HEK293T (cell line): ENCODE measurements at regions of chr17 and their contacts with region 1.

Region 1: DNA sequence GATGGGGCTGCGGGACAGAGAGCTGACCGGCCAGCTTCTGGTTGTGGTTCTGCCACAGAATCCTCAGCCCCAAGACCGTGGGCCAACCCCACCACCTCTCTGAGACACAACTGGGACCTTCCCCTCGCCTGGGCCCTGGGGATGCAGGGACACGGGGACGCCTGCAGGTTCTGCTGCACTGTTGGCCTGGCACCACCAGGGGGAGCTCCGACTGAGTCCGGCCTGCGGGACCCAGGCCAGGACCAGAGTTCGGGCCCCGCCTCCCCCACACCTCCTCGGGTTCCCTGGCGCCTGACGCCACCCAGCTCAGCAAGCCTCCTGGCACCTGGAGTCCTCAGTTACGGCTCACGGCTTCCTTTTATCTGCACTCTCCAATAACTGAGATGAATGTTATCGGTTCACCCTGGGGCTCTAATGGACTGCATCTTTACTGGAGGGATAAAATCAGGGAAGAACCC is 27.3 kb downstream of the TBC1D16 start:
- DNase-seq: peak; percentile 93

Region 2: DNA sequence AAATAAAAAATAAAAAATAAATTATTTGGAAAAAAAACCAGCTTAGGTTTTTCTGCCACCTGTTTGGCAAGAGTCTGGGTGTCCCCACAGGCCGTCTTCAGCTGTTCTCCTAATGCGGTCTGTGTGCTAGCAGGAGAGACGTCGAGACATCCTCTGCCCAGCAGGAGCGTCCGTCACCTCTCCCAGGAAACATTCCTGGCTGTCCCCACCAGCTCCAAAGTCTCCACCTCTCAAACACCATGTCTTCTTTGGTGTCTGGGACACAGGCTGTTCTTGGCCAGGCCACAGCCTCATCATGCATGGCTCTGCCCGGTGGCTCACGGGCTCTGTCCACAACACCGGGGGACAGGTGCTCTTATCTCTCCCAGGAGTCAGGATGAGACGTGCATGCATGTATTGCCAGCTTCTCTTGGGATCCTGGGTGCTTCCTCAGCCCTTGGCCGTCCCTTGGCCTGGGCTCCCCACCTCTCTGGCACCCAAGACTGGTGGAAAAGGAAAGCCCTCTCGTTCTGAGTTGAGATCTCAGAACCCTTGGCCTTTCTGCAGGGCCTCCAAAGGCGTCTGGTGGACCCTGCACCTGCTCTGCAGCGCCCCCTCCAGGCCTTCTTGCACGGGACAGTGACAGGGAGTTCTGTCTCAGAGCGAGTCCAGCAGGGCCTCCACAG is 84.3 kb before region 1 on chr17:
- CTCF ChIA-PET with region 1: no interaction called
- POLR2A ChIA-PET with region 1: no interaction called
- DNase-seq: peak; percentile 87

Region 3: DNA sequence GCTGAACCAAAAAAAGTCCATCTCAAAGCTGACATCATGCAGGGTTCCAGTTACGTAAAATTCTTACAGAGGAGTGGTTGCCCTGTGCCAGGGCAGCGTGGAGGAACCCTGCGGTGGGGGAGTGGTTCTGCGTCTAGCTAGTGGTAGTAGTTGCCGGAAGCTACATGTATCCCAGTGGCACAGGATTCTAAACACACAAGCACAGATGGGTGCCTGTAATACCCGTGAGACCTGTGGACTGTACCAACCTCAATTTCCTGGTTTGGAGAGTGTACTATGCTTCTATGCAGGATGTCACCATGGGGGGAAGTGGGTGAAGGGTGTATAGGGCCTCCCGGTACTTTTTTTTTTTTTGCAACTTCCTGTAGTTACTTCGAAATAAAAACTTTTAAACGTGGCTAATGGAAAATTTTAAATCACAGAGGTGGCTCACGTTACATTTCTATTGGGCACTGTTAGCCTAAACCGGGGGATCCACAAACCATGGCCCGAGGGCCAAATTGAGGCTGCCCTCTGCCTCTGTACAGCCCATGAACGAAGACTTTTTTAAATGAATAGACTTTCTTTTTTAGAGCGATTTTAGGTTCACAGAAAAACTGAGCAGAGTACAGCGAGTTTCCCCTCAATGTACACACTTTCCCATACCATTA is 11.3 kb before region 1 on chr17:
- CTCF ChIA-PET with region 1: interaction called, 29 read pairs
- POLR2A ChIA-PET with region 1: interaction called, 35 read pairs
- DNase-seq: no peak

Region 4: DNA sequence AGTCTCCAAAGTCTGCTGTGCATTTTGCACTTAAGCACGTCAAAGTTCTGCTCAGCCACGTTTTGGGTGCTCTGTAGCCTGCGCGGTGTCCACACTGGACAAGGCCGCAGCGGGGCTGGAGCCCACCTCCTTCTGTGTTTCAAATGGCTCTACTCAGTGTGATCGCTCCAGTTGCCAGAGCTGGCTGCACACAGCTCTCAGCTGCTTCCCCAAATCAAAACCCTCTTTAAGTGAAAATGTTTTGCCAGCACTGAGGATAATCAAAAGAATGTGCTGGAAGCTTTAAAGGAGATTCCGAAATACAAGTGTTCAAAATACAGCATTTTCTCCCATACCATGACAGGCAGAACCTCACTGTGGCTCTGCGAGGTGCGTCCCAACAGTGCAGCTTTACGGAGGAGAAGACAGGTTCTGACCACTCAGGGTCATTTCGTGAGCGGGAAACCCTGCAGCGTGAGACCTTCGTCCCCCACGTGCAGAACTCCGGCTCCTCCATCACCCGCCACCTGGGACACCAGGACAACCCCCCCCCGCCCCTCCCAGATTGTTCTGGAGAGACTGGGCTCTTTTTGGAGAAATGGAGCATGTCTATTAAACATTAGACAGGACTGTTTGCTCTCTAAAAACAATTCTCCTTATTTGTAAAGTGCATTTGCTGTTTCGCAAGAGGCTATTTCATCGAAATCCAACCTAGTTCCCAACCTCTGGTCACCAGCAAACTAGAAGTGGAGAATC is 10.7 kb after region 1 on chr17:
- CTCF ChIA-PET with region 1: interaction called, 12 read pairs
- POLR2A ChIA-PET with region 1: no interaction called
- DNase-seq: no peak

Region 5: GRCh38 chr17:80101011-80101945 is 92.9 kb after region 1 on chr17 and contains the start of gene GAA:
- CTCF ChIA-PET with region 1: interaction called, 3 read pairs
- POLR2A ChIA-PET with region 1: interaction called, 11 read pairs
- DNase-seq: peak; percentile 99

Region 6: DNA sequence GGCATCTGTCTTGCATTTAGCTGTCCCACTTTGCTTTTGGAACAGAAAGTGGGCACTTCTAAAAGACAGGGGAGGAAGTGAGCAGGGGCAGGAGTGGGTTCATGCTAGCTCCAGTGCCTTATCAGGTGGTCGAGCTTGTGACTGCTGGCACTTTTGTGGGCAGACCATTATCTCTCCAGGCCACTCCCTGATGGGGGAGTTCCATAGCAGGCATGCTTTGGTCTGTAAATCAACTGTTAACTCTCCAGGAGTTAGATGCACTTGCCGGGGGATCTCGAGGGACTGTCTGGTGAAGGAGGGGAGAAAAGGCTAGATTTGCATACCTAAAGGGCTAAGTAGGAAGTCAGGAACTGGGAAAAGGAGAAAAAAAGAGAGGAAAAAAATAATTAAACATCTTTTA is 152.1 kb after region 1 on chr17:
- CTCF ChIA-PET with region 1: no interaction called
- POLR2A ChIA-PET with region 1: no interaction called
- DNase-seq: no peak